Vagina (tissue), 2 donors: ENCODE measurements at regions of chr6 and their contacts with region 1.

Region 1: DNA sequence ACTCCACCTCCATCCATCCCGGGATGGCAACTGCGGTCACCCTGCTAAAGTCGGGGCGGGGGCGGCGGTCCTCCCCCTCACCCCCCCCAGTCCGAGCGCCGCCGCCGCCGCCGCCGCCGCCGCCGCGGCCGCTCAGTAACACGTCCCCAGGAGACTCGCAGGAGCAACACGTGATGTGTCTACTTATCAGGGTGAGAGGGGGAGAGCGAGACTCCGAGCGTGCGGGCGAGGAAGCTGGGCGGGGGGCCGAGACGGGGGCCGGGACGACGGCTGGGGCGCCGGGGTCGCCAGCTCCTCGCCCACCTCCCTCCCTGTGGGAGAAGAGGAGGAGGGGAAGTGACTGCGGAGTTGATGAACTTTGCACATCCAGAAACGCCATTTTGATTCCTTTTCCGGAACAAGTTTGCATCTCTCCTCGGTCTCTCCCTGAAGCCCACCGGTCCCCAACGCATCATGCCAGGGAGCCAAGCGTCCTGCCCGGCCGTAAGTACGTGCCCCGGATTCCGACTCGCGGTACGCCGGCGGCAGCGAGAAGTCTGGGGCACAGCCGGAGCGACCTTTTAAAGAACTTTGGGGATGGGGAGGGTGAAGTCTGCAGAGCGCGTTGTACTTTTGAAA is at the start of gene RREB1:
- DNase-seq: no peak
- H3K4me3 ChIP-seq: peak within 1 kb of the TSS; percentile 63 to 93
- H3K27ac ChIP-seq: peak within 1 kb of the TSS; percentile 95
- H3K4me1 ChIP-seq: peaks cover 11% of the 10 kb centered on the region
- H3K27me3 ChIP-seq: no peaks in the 10 kb centered on the region
- CTCF ChIP-seq: no peak
- POLR2A ChIP-seq: peak in 1 of 2 donors; percentile 61
- total RNA-seq, gene RREB1: 57.2 TPM

Region 2: DNA sequence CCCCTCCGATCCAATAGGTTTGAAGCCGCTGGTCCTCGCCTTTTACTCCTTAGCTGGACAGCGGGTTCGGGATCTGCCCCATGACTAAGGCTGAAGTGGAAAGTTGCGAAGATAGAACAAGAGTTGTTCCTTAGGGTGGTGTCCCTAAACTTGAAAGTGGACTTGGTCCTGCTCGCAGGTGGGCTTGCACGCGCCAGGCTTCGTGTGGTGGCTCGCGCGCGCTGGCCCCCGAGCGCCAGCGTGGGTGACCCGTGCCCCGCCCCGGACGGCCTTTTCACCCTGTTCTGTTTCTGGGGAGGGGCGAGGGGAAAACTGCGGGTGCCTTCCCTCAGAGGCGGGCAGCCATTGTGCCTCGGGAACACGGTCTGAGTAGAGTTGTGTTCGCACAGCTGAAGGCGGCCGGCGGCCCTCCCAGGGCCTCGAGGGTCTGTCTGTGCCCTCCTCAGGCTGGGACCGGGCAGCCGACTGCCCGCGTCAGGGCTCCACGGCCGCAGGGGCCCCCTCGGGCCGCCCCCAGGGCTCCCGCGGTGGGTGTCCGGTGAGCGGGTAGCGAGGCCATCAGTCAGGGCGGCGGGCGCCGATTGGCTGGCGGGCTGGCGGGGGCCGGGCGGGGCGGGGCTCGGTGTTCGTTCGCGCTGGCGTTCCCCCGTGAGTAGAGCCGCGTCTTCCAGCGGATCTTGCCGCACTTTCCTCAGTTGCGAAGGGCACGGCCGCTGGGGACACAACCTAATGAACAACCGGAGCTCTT is 33.1 kb after region 1 on chr6:
- intact Hi-C with region 1: loop called (anchors 2 kb)
- DNase-seq: peak in 1 of 2 donors; percentile 94
- H3K4me3 ChIP-seq: peak overlapping the region; percentile 78 to 91
- H3K27ac ChIP-seq: peak overlapping the region; percentile 97
- H3K4me1 ChIP-seq: peaks cover 72% of the 10 kb centered on the region
- H3K27me3 ChIP-seq: no peaks in the 10 kb centered on the region
- CTCF ChIP-seq: no peak
- POLR2A ChIP-seq: no peak

Region 3: DNA sequence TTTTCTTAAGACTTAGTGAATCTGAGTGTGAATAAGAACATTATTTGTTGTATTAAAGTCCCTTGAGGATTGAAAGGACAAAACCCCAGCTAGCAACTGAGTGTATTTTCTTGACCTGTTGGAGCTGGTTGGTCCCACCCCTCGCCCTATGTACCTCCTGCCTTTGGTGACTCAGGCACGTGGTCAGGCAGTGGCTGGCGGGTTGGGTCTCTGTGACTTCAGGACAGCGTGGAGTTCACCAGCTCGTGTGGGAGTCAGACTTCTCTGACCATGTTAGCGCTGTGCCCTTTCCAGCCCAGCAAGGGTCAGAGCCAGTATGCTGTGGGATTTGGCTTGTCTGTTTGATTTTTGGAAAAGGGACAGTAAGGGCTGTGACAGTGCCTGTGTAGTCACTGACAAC is 111.6 kb after region 1 on chr6:
- intact Hi-C with region 1: loop called (anchors 1 kb)
- DNase-seq: no peak
- H3K4me3 ChIP-seq: no peak overlapping the region
- H3K27ac ChIP-seq: peak overlapping the region; percentile 9
- H3K4me1 ChIP-seq: peaks cover 44% of the 10 kb centered on the region
- H3K27me3 ChIP-seq: no peaks in the 10 kb centered on the region
- CTCF ChIP-seq: no peak
- POLR2A ChIP-seq: no peak

Region 4: DNA sequence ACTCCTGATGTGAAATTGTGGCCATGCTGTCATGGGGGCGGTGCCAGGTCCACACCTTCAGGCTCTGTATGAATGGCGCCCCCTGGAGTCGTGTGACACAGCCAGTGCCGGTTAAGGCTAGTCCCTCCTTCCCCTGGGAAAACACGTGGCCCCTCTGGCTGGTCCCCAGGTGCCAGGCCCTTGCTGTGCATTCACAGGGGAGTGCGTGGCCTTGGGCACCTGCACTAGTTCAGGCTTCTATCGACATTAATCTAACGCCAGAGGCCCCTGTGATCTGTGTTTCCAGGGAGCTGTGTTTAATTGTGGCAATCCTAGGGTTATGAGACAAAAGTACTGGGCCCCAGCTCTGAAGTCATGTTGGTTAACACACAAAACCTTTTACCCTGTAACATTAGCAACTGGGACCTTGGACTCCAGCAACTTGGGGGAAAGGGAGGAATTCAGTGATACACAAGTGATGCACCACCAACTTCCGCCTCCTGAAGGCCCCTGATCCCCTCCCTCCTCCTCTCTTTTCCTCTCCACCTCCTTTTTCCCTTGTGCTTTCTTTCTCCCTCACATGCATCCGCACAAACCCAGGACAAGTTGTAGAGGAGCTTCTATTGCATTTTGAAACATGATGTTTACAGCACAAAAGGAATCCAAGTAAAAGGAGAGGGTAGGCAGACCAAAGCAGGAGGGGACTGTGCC is 131.4 kb after region 1 on chr6:
- intact Hi-C with region 1: loop called (anchors 10 kb)
- DNase-seq: no peak
- H3K4me3 ChIP-seq: no peak overlapping the region
- H3K27ac ChIP-seq: no peak overlapping the region
- H3K4me1 ChIP-seq: peaks cover 27% of the 10 kb centered on the region
- H3K27me3 ChIP-seq: no peaks in the 10 kb centered on the region
- CTCF ChIP-seq: peak in 2 of 3 experiments; percentile 35 to 61
- POLR2A ChIP-seq: no peak